AG04449 (cell line): ENCODE measurements at regions of chr9 and their contacts with region 1.

Region 1: GRCh38 chr9:7186175-7186574 is 428.4 kb downstream of the KDM4C start:
- DNase-seq: no peak
- H3K4me3 ChIP-seq: no peak overlapping the region
- CTCF ChIP-seq: peak; percentile 42

Region 2: GRCh38 chr9:7051711-7052110 is 134.5 kb before region 1 on chr9:
- CTCF ChIA-PET with region 1: interaction called, 11 read pairs
- POLR2A ChIA-PET with region 1: interaction called, 3 read pairs
- DNase-seq: no peak
- H3K4me3 ChIP-seq: no peak overlapping the region
- CTCF ChIP-seq: no peak

Region 3: GRCh38 chr9:7150153-7150890 is 35.9 kb before region 1 on chr9:
- CTCF ChIA-PET with region 1: no interaction called
- POLR2A ChIA-PET with region 1: no interaction called
- DNase-seq: no peak
- H3K4me3 ChIP-seq: no peak overlapping the region
- CTCF ChIP-seq: no peak

Region 4: DNA sequence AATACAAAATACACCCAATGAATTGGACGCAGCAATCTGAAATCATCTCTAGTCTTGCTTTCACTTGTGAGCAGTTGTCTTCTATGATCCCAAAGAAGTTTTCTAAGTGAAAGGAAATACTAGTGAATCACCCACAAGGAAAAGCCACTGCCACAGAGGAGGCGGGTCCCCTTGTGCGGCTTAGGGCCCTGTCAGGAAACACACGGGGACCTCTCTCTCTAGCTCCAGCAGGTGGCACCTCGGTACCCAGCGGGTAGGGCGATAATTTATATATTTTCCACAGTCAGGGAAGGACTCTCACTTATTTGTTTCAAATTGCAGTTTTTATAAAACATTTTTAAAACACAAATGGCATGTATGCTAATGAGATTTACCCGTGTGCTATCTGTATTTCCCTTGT is 11.3 kb before region 1 on chr9:
- CTCF ChIA-PET with region 1: interaction called, 11 read pairs
- POLR2A ChIA-PET with region 1: interaction called, 3 read pairs
- DNase-seq: no peak
- H3K4me3 ChIP-seq: no peak overlapping the region
- CTCF ChIP-seq: no peak

Region 5: GRCh38 chr9:7201201-7201600 is 15.0 kb after region 1 on chr9:
- CTCF ChIA-PET with region 1: no interaction called
- POLR2A ChIA-PET with region 1: no interaction called
- DNase-seq: no peak
- H3K4me3 ChIP-seq: no peak overlapping the region
- CTCF ChIP-seq: no peak